ENCODE measurements at regions of chr18 and their contacts with region 1.

Region 1: DNA sequence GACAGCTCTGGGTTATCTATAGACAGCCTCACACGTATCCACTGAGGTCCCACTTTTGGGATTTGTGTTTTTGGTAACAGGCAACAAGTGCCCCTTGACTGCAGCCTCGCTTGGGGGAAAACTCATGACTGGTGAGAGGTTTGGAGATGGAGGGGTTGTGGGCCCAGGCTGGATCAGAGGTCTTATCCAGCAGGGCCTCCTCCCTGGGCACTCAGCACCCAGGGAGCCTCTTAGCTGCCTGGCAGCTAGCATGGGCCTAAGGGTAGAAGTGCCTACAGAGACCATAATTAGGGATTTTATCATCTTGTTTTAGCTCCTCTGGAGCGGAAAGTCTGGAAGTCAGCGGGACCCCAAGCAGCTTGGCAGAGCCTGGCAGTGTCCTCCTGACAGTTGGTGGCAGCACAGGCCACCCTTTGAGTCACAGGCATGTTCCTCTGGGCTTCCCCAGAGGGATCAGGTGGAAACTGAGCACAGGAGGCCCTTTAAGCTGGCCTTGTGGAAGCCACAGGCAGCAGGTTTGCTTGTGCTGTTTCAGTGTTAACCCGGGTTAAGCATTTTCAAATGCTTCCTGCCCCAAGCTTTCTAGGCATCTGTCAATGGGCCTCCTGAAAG is 143.1 kb downstream of the KCTD1 start:
- DNase-seq: no peak
- H3K4me3 ChIP-seq: no peak overlapping the region
- H3K27me3 ChIP-seq: peaks cover 1% of the 10 kb centered on the region; the same call in 1 of the 2 replicates
- CTCF ChIP-seq: peak; percentile 66

Region 2: DNA sequence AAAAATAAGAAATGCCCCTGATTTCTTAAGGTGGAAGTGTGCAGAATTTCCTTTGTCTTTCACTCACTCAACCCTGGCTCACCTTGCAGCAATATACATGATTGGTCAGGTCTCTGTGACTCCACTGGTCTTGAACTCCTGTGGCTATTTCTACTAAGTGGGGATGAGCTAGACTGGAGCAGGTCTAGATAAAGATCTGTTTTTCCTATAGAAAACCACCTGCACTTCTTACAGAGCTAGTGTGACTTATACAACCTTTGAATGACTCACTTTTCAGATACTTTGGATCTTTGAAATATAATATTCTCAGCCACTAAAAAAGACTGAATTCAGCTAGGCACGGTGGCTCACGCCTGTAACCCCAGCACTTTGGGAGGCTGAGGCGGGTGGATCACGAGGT is 241.6 kb after region 1 on chr18:
- CTCF ChIA-PET with region 1: interaction called, 29 read pairs
- POLR2A ChIA-PET with region 1: no interaction called
- DNase-seq: no peak
- H3K4me3 ChIP-seq: no peak overlapping the region
- H3K27me3 ChIP-seq: peaks cover 4% of the 10 kb centered on the region; the same call in 1 of the 2 replicates
- CTCF ChIP-seq: no peak

Region 3: GRCh38 chr18:26654616-26655524 is 249.6 kb after region 1 on chr18:
- CTCF ChIA-PET with region 1: interaction called, 29 read pairs
- POLR2A ChIA-PET with region 1: no interaction called
- DNase-seq: no peak
- H3K4me3 ChIP-seq: no peak overlapping the region
- H3K27me3 ChIP-seq: peaks cover 29% of the 10 kb centered on the region
- CTCF ChIP-seq: no peak